GM18951 (cell line): ENCODE measurements at regions of chr1 and their contacts with region 1.

Region 1: DNA sequence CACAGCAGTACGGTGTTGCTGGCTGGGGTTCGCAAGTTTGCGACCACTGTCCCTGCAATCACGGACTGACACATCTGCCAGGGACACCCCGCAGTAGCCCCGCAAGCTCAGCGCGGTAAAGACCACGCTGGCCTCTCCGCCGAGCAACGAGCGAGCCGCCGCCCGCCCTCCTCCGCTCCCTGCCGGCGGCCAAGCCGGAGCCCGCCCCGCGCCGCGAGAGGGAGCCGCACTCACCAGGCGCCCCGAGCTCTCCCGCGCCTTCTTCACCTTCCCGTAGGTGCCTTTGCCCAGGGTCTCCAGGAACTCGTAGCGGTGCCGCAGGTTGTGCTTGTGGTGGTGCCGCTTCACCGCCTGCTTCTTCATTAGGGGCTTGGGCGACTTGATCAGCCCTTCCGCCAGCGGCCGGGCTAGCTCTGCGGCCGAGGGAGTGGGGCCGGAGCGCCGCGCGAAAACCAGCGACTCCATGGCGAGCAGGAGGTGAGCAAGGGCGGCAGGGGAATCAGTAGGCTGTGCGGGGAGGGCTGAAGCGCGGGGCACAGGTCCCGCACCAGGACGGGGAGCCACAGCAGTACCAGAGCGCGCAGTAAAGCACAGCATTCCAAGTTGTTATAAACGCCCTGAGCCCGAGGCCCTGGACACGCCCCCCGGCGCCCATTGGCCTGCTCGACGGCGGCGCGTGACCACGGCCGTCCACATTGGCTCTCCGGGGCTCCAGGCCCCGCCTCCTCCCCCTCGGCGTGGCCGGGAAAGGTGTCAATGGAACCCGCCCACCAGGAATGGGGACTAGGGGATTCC is at the start of gene NUAK2:
- POLR2A ChIP-seq: no peak

Region 2: GRCh38 chr1:204480515-204480914 is 840.8 kb before region 1 on chr1:
- in situ Hi-C with region 1: no loop called
- POLR2A ChIP-seq: no peak

Region 3: GRCh38 chr1:205284343-205285144 is 36.8 kb before region 1 on chr1:
- in situ Hi-C with region 1: loop called (anchors 5 kb)
- POLR2A ChIP-seq: no peak

Region 4: DNA sequence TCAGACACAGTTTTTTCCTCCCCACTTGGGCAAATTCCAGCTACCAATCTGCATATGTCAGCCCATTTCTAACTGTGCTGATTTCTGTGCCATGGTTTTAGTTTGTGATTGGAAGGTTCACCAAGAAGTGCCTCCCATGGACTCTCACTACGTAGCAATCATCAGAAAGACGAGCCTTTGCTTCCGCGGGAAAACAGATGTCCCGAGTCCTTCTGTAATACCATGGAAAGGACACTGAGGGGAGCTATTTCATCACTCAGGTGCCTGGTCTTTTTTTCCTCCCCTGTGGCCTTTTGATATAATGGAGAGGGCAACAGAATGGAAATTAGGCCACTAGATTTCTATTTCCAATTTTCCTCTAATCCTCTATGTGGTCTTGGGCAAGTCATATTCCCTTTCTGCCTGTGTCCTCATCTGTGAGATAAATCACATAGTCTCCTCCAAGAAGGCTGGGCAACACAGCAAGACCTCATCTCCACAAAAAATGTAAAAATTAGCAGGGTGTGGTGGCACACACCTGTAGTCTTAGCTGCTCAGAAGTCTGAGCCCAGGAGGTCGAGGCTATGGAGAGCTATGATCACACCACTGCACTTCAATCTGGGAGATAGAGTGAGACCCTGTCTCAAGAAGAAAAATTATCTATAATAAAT is 75.7 kb after region 1 on chr1:
- in situ Hi-C with region 1: no loop called
- POLR2A ChIP-seq: no peak

Region 5: GRCh38 chr1:205791568-205792180 is 470.3 kb after region 1 on chr1:
- in situ Hi-C with region 1: no loop called
- POLR2A ChIP-seq: no peak